Naive thymus-derived CD4-positive, alpha-beta T cell (primary cell): ENCODE measurements at regions of chr12 and their contacts with region 1.

Region 1: DNA sequence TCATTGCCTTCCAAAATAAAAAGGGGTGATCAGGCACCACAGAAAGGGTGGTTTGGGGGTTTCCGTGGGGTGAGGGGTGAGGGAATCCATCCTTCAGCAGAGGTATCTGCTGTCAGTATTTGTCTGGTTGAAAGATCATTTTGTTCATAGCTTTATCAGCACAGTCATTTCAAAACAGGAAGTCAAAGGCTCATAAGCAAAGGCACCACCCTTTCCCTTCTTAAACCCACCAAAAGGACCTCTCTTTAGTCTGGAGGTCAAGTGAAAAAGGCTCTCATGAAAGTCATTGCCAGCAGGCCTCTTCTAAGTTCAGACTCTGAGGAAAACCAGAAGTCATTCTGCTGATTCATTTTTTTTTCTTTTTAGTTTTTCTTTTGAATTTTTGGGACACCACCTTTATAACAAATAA is 6.2 kb downstream of the CHST11 start:
- DNase-seq: peak in 7 of 9 donors; percentile 41 to 68 (median 51)
- ATAC-seq: peak; percentile 71
- H3K4me3 ChIP-seq: peak overlapping the region; percentile 12
- H3K4me3 Mint-ChIP-seq: peak overlapping the region; percentile 68 to 90 (median 85)
- H3K27ac ChIP-seq: peak overlapping the region; percentile 68
- H3K27ac Mint-ChIP-seq: peak overlapping the region; percentile 63 to 98 (median 93)
- H3K4me1 ChIP-seq: peaks cover 76 to 77% of the 10 kb centered on the region in 2 donors
- H3K4me1 Mint-ChIP-seq: peaks cover 60 to 93% (median 78%) of the 10 kb centered on the region in 7 donors
- H3K27me3 ChIP-seq: no peaks in the 10 kb centered on the region
- H3K27me3 Mint-ChIP-seq: no peaks in the 10 kb centered on the region

Region 2: DNA sequence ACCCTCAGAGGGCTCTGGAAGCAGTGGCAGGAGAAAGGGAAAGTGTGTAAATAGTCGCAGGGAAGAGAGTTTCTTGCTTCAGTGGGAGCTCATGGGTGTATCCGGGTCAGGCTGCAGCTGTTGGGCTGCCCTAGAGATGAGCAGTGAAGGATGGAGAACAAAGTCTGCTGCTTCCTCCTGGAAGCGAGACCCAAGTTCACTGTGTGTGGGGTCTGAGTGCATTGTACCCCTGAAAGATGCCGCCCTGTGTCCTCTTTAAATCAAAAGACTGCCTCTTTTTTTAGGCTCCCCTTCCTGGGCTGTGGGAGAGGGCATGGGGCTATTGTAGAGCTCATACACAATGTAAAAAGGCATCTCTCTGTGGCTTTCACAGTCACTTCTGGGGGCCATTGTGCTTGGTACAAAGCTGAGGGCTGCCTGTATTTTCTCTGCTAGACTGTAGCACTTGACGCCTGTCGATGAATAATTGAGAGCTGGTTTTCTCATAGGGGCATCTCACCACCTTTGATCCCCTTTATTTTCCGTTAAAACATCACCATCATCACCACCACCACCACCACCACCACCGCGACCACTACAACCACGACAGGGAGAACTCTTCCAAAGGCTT is 10.5 kb after region 1 on chr12:
- CTCF ChIA-PET with region 1: interaction called, 13 read pairs
- POLR2A ChIA-PET with region 1: interaction called, 20 read pairs
- intact Hi-C with region 1: loop called (anchors 1 kb)
- DNase-seq: no peak
- ATAC-seq: peak; percentile 51
- H3K4me3 ChIP-seq: peak overlapping the region; percentile 14
- H3K4me3 Mint-ChIP-seq: peak overlapping the region; percentile 10 to 72 (median 52)
- H3K27ac ChIP-seq: no peak overlapping the region
- H3K27ac Mint-ChIP-seq: peak overlapping the region; percentile 46 to 91 (median 76)
- H3K4me1 ChIP-seq: peaks cover 44 to 59% of the 10 kb centered on the region in 2 donors
- H3K4me1 Mint-ChIP-seq: peaks cover 60 to 86% (median 82%) of the 10 kb centered on the region in 7 donors
- H3K27me3 ChIP-seq: no peaks in the 10 kb centered on the region
- H3K27me3 Mint-ChIP-seq: no peaks in the 10 kb centered on the region

Region 3: DNA sequence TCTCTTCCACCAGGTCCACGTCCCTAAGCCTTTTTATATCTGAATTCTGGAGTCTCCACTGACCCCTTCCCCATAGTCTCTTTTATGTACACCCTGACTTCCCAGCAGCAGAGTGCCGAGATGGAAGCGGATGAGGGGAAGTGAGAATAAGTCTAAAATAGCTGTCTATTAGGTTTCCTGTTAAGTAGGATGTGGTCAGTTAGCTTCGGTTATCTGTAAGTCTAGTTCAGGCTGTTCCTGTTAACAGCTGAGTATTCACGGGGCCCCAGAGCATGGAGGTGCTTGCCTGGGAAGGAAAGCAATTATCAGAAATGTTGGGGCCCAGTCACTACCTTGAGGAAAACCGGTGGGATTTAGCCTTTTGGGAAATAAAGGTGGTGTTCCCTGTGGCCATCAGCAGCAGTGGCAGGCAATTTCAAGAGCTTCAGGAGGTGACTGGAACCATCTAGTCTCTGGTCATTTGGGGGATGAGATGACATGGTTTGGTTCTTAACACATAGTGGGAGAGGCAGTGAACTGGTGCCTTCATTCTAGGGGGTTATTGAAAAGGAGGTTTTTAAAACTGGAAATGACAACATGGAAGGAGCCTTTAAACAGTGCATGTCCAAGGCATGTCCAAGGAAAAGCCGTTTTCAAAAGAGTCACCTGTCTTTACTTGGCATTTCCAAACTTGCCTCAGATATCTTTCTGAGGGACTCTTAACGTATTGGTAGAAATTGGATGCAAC is 15.6 kb after region 1 on chr12:
- CTCF ChIA-PET with region 1: interaction called, 13 read pairs
- POLR2A ChIA-PET with region 1: interaction called, 50 read pairs
- intact Hi-C with region 1: loop called (anchors 1 kb)
- DNase-seq: peak in 4 of 9 donors; percentile 18 to 45 (median 34)
- ATAC-seq: peak; percentile 84
- H3K4me3 ChIP-seq: peak overlapping the region; percentile 22
- H3K4me3 Mint-ChIP-seq: peak overlapping the region; percentile 82 to 93 (median 89)
- H3K27ac ChIP-seq: peak overlapping the region; percentile 49
- H3K27ac Mint-ChIP-seq: peak overlapping the region; percentile 83 to 97 (median 90)
- H3K4me1 ChIP-seq: peaks cover 66 to 67% of the 10 kb centered on the region in 2 donors
- H3K4me1 Mint-ChIP-seq: peaks cover 57 to 90% (median 86%) of the 10 kb centered on the region in 7 donors
- H3K27me3 ChIP-seq: no peaks in the 10 kb centered on the region
- H3K27me3 Mint-ChIP-seq: no peaks in the 10 kb centered on the region

Region 4: DNA sequence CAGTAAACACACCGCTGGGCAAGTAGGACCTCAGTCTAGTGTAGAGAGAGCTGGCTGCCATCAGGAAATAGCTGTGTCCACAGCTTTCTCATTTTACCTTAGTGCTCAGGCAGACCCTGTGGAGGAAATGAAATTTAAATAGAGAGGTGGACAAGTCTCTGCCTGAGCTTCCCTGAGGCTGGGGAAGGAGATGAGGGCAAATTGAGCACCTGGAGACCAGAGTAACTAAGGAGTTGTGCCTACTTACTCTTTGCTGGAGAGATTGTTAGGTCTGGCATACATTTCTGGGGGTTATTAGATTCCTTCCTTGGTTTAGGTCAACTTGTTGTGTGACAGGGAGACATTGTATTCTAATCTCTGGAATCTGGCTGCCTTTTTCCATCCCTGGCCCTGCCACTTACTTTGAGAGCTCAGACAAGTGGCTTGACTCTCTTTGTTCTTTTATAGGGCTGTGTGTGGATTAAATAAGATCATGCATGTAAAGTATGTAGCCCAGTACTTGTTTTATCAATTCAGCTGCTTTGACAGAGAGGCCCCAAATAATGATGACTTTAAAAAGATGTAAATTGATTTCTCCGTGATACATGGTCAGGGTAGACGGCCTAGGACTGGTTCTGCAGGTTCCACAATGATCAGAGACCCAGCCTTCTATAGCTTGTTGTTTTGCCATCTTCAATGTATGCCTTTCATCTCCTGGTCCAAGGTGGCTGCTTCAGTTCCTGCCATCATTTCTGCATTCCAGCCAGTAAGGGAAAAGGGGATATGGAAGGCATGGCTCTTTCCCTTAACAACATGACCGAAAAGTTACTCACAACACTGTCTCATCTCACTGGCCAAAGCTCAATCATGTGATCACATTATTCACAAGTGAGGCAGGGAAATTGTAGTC is 66.3 kb after region 1 on chr12:
- CTCF ChIA-PET with region 1: no interaction called
- POLR2A ChIA-PET with region 1: no interaction called
- intact Hi-C with region 1: no loop called
- DNase-seq: no peak
- ATAC-seq: no peak
- H3K4me3 ChIP-seq: no peak overlapping the region
- H3K4me3 Mint-ChIP-seq: no peak overlapping the region
- H3K27ac ChIP-seq: no peak overlapping the region
- H3K27ac Mint-ChIP-seq: peak overlapping the region in 2 of 9 donors; percentile 24 to 28
- H3K4me1 ChIP-seq: peaks cover 5 to 13% of the 10 kb centered on the region in 2 donors
- H3K4me1 Mint-ChIP-seq: peaks cover 54 to 74% (median 67%) of the 10 kb centered on the region in 7 donors
- H3K27me3 ChIP-seq: no peaks in the 10 kb centered on the region
- H3K27me3 Mint-ChIP-seq: no peaks in the 10 kb centered on the region